ENCODE measurements at regions of chr9 and their contacts with region 1.

Region 1: DNA sequence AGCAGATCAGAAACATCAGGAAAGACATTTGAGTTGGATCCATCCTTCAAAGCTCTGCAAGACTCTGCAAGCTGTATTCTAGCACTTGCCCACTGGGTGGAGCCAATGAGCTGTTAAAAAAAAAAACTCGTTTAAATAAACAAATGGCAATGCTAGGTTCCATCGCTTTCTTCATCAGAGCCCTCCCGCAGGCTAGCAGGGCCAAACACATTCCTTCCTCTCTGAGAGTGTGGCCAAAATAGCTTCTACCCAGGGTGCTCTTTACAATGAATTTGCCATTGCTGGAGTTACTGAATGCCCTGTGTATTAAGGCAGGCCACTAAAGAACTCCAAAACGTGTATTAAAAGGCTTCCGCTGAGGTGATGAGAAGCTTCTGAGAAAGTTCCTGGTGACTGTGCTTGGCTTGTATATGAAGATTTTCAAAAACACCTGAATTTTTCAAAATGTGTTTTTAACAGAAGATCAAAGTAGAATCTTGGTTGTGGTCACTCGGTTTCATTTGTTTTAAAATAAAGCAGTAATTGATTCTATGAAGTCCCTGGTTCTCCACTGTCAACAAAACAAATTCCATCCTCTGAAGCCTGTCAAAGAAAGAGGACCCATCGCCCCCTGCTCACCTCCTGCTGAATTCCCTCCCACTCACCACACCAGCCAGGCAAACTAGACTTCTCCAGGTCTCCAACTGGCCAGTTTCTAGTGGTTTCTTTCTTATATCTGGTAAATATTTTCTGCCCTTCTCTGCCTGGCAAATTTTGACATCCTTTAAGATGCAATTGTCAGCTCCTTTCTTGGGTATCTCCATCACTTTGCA is 36.5 kb upstream of the EQTN start:
- DNase-seq: peak; percentile 66 to 73
- H3K4me3 ChIP-seq: no peak overlapping the region
- H3K4me3 Mint-ChIP-seq: no peak overlapping the region
- H3K27ac Mint-ChIP-seq: no peak overlapping the region
- H3K4me1 ChIP-seq: peaks cover 8% of the 10 kb centered on the region
- H3K4me1 Mint-ChIP-seq: peaks cover 6% of the 10 kb centered on the region
- H3K27me3 ChIP-seq: no peaks in the 10 kb centered on the region
- H3K27me3 Mint-ChIP-seq: no peaks in the 10 kb centered on the region
- CTCF ChIP-seq: peak; percentile 64 to 77

Region 2: GRCh38 chr9:27371382-27371781 is 37.9 kb after region 1 on chr9:
- CTCF ChIA-PET with region 1: interaction called, 5 read pairs
- POLR2A ChIA-PET with region 1: no interaction called
- intact Hi-C with region 1: loop called (anchors 5 kb)
- DNase-seq: peak; percentile 64 to 65
- H3K4me3 ChIP-seq: no peak overlapping the region
- H3K4me3 Mint-ChIP-seq: peak overlapping the region; percentile 57
- H3K27ac Mint-ChIP-seq: peak overlapping the region; percentile 80
- H3K4me1 ChIP-seq: peaks cover 52% of the 10 kb centered on the region
- H3K4me1 Mint-ChIP-seq: peaks cover 37% of the 10 kb centered on the region
- H3K27me3 ChIP-seq: no peaks in the 10 kb centered on the region
- H3K27me3 Mint-ChIP-seq: no peaks in the 10 kb centered on the region
- CTCF ChIP-seq: no peak

Region 3: DNA sequence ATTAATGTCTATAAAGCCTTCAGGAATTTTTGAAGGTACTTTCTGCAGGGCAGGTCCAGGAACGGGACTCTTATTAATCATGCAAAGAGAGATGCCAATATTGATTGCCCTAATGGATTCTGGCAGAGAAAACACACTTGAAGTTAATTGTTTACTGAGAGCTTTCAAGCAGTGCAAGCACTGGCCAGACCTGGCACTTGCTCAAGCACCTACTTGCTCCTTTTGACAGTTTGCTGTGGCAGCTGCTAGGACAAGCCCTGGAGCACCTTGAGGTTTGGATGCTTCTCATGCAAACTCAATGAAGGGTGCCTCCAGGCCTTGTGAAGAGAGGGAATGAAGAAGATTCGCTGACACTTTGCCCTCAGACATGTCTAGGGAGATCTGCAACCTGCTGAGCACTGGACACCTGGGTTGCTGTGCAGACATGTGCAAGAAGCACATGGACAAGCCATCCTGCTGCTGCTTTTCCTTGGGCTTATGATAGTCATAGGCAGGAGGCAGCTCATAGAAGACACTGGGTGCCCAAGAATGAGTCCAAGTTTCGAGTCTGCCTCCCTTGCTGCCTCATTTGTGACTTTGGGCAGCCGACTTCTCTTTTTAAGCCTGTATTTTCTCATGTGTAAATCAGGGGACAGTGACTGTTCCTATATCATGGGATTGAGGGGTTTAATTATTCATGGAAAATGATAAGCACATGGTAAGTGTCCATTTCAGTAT is 52.3 kb after region 1 on chr9:
- CTCF ChIA-PET with region 1: interaction called, 11 read pairs
- POLR2A ChIA-PET with region 1: no interaction called
- intact Hi-C with region 1: loop called (anchors 1 kb)
- DNase-seq: no peak
- H3K4me3 ChIP-seq: no peak overlapping the region
- H3K4me3 Mint-ChIP-seq: no peak overlapping the region
- H3K27ac Mint-ChIP-seq: no peak overlapping the region
- H3K4me1 ChIP-seq: peaks cover 30% of the 10 kb centered on the region
- H3K4me1 Mint-ChIP-seq: peaks cover 38% of the 10 kb centered on the region
- H3K27me3 ChIP-seq: no peaks in the 10 kb centered on the region
- H3K27me3 Mint-ChIP-seq: no peaks in the 10 kb centered on the region
- CTCF ChIP-seq: no peak

Region 4: DNA sequence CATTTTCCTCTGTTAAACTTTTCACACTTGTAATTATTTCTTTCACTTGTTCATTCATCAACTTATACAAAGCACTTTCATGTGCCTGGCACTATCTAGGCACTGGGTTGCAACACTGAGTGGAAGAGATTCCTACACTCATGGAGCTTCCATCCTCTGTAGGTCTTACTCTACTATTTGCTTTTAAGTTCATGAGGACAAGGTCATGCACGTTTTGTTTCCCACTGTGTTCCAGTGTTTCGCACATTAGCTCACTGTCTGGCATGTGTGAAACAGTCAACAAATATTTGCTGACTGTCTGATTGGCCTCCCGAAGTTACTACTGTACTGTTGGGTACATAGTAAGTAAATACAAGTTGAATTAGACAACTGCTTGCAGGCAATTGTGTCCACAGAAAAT is 102.8 kb after region 1 on chr9:
- CTCF ChIA-PET with region 1: interaction called, 6 read pairs
- POLR2A ChIA-PET with region 1: no interaction called
- intact Hi-C with region 1: loop called (anchors 1 kb)
- DNase-seq: peak; percentile 47 to 48
- H3K4me3 ChIP-seq: no peak overlapping the region
- H3K4me3 Mint-ChIP-seq: no peak overlapping the region
- H3K27ac Mint-ChIP-seq: no peak overlapping the region
- H3K4me1 ChIP-seq: peaks cover 56% of the 10 kb centered on the region
- H3K4me1 Mint-ChIP-seq: peaks cover 45% of the 10 kb centered on the region
- H3K27me3 ChIP-seq: no peaks in the 10 kb centered on the region
- H3K27me3 Mint-ChIP-seq: no peaks in the 10 kb centered on the region
- CTCF ChIP-seq: no peak

Region 5: DNA sequence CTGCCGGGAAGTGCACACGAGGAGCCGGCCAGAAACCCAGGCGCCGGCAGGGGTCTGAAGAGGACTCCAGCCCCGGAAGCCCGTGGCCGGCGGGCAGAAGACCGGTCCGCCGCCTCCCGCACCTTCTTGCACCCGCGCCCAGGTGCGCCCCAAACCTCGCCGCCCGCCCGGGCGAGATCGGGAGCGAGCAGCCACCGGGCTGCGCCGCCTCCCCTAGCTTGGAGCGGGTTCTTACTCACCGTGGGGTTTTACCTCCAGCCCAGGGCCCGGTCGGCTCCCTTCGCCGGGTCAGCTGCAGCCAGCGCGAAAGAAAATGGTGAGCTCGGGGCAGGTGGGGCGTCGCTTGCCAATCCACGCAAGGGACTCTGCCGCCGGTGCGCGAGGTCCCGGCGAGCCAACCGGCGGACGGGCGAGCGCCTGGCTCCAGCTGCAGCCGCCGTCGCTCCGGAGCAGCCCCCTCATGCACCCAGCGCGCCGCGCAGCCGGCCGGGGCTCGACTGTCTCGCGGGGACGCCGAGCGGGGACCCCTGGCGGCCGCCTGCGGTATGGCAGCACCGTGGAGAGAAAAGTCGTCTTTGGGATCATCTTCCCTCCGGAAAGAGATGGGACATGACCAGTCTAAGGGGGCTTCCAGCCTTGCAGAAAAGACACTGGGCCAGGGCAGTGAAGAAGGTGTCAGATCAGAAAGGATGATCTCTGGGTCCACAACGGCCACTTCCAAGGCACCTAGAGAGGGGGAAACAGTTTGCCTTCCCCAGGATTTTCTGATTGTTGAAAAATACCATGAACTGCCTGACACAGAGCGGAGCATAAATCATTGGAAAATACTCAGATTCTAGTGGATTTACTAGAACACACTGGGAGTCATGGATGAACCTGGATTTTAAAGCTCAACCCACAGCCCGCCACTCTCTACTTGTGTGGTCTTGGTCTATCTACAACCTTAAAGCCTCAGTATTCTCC is 196.2 kb after region 1 on chr9 and contains the start of gene MOB3B:
- CTCF ChIA-PET with region 1: interaction called, 10 read pairs
- POLR2A ChIA-PET with region 1: no interaction called
- intact Hi-C with region 1: loop called (anchors 1 kb)
- DNase-seq: peak; percentile 56 to 73
- H3K4me3 ChIP-seq: peak within 1 kb of the TSS; percentile 58
- H3K4me3 Mint-ChIP-seq: peak within 1 kb of the TSS; percentile 75
- H3K27ac Mint-ChIP-seq: peak within 1 kb of the TSS; percentile 57
- H3K4me1 ChIP-seq: no peaks in the 10 kb centered on the region
- H3K4me1 Mint-ChIP-seq: no peaks in the 10 kb centered on the region
- H3K27me3 ChIP-seq: no peaks in the 10 kb centered on the region
- H3K27me3 Mint-ChIP-seq: no peaks in the 10 kb centered on the region
- CTCF ChIP-seq: peak; percentile 45 to 57
- total RNA-seq, gene MOB3B: 4.7 and 5.3 TPM in 2 replicates

Region 6: GRCh38 chr9:27548055-27548741 is 214.8 kb after region 1 on chr9:
- CTCF ChIA-PET with region 1: interaction called, 12 read pairs
- POLR2A ChIA-PET with region 1: no interaction called
- intact Hi-C with region 1: loop called (anchors 1 kb)
- DNase-seq: no peak
- H3K4me3 ChIP-seq: no peak overlapping the region
- H3K4me3 Mint-ChIP-seq: no peak overlapping the region
- H3K27ac Mint-ChIP-seq: no peak overlapping the region
- H3K4me1 ChIP-seq: no peaks in the 10 kb centered on the region
- H3K4me1 Mint-ChIP-seq: no peaks in the 10 kb centered on the region
- H3K27me3 ChIP-seq: no peaks in the 10 kb centered on the region
- H3K27me3 Mint-ChIP-seq: no peaks in the 10 kb centered on the region
- CTCF ChIP-seq: peak in 1 of 2 experiments; percentile 29